A549 (cell line): ENCODE measurements at regions of chr3 and their contacts with region 1.

Region 1: GRCh38 chr3:73056014-73056844 is 5.2 kb upstream of the EBLN2 start:
- DNase-seq: peak; percentile 12 to 64
- ATAC-seq: peak; percentile 56 to 79; a peak in 4 of 6 replicates
- H3K4me3 ChIP-seq: no peak overlapping the region
- H3K27ac ChIP-seq: peak overlapping the region in 1 of 2 experiments; percentile 51; a peak in 3 of 6 replicates
- H3K4me1 ChIP-seq: peaks cover 30% of the 10 kb centered on the region; the same call in 2 of the 3 replicates
- CTCF ChIP-seq: peak; percentile 70
- EP300 ChIP-seq: no peak
- POLR2A ChIP-seq: no peak
- RAD21 ChIP-seq: peak; percentile 66 to 74

Region 2: GRCh38 chr3:72418244-72418643 is 638.0 kb before region 1 on chr3:
- CTCF ChIA-PET with region 1: no interaction called
- POLR2A ChIA-PET with region 1: no interaction called
- DNase-seq: no peak
- ATAC-seq: no peak
- H3K4me3 ChIP-seq: no peak overlapping the region
- H3K27ac ChIP-seq: no peak overlapping the region
- H3K4me1 ChIP-seq: peaks cover 5% of the 10 kb centered on the region; the same call in 1 of the 3 replicates
- CTCF ChIP-seq: no peak
- EP300 ChIP-seq: no peak
- POLR2A ChIP-seq: no peak
- RAD21 ChIP-seq: no peak

Region 3: DNA sequence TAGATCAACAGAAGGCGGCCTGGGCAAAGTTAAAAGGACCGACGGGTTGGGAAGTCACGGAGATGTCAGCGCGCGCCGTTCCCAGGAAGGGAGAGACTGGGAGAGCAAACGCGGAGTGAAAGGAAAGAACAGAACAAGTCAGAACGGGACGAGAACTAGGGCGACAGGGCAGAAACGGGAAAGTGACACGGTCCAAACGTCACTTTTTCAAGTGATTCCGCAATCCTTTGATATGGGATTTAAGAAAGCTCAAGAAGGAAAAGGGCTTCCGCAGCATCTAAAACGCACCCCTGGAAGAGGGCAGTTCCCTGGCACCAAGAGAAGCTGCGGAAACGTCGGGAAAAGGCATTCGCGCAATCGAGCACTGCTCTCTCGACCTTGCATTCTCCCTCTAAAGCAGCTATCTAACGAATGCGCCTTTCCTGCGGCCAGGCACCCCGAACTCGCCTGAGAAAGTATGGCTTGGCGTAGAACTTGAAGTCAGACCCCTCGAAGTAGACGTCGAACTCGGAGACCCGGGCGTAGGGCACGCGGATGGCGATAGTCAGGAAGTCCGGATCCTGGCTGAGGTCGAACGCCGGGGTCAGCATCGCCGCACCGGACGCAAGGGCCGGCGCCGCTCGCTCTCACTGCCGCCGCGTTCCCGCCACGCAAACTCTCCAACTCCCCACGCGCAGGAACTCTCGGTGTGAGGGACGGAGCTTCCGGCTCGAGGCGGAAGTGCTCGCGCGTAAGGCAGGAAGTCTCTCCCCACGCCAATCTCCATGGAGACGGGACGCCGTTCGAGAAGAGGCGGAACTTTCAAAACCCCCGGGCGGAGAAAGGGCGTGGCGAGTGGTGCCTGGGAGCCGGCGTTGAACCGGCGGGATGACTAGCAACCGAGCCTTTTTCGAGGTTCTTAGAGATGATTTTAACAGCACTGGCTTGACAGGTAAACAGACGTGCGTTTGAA is 208.2 kb before region 1 on chr3 and contains the start of gene SHQ1:
- CTCF ChIA-PET with region 1: interaction called, 37 read pairs
- POLR2A ChIA-PET with region 1: no interaction called
- DNase-seq: peak; percentile 84 to 92
- ATAC-seq: peak; percentile 98
- H3K4me3 ChIP-seq: peak within 1 kb of the TSS; percentile 80
- H3K27ac ChIP-seq: peak within 1 kb of the TSS; percentile 74 to 91
- H3K4me1 ChIP-seq: peaks cover 31% of the 10 kb centered on the region
- CTCF ChIP-seq: no peak
- EP300 ChIP-seq: no peak
- POLR2A ChIP-seq: peak; percentile 88
- RAD21 ChIP-seq: no peak
- polyA plus RNA-seq, gene SHQ1: 19.5 and 22.2 TPM in 2 replicates

Region 4: DNA sequence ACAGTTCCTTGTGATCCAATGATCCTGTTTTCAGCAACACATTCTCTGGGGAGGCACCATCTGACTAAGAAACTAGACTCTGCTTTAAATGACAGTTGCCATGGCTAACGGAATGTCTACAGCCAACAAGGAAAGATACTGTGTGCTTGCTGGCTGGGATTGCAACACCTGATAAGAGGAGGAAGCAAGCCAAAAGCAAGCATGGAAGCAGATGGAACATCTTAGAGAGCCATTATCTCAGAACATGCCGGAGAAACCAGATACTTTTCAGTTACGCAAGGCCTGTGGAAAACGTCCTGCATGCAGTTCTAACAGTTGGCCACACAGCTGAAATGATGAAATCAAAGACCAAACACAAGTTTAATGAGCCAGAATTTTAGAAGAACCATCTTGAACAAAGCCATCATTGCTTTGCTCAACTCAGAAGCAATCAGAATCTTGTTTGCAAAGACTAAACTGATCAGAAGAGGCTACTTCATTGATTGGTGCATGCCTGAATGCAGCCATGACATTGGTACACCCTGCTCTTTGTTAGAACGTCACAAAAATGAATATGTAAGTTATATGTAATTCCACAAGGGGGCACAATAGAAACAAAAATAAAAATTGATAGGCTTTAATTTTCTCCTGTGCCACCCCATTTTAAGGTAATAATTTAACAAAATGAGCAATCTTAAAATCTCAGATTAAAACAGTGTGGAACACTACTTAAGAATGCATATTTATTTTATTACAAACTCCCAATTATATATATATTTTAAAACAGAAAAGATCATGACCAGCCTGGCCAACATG is 117.6 kb before region 1 on chr3:
- CTCF ChIA-PET with region 1: interaction called, 42 read pairs
- POLR2A ChIA-PET with region 1: no interaction called
- DNase-seq: peak; percentile 70
- ATAC-seq: peak; percentile 94 to 98
- H3K4me3 ChIP-seq: no peak overlapping the region
- H3K27ac ChIP-seq: peak overlapping the region in 1 of 2 experiments; percentile 33; a peak in 1 of 6 replicates
- H3K4me1 ChIP-seq: peaks cover 6% of the 10 kb centered on the region; the same call in 1 of the 3 replicates
- CTCF ChIP-seq: peak; percentile 79
- EP300 ChIP-seq: no peak
- POLR2A ChIP-seq: no peak
- RAD21 ChIP-seq: peak; percentile 55 to 74

Region 5: DNA sequence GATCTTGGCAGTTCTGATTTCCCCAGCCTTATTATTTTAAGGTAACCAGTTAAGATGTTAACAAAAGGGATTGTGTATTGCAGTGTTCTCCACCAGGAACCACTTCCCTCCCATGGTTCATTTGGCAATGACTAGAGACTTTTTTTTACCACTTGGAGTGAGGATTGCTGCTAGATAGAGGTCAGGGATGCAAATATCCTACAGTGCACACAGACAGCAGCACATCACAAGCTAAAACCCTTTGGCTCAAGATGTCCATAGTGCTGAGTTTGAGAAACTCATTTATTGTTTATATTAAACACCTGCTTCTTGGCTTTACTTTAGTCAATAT is 18.9 kb before region 1 on chr3:
- CTCF ChIA-PET with region 1: interaction called, 11 read pairs
- POLR2A ChIA-PET with region 1: no interaction called
- DNase-seq: no peak
- ATAC-seq: peak in 1 of 2 experiments; percentile 39; a peak in 3 of 6 replicates
- H3K4me3 ChIP-seq: no peak overlapping the region
- H3K27ac ChIP-seq: no peak overlapping the region
- H3K4me1 ChIP-seq: peaks cover 18% of the 10 kb centered on the region
- CTCF ChIP-seq: no peak
- EP300 ChIP-seq: no peak
- POLR2A ChIP-seq: no peak
- RAD21 ChIP-seq: no peak

Region 6: DNA sequence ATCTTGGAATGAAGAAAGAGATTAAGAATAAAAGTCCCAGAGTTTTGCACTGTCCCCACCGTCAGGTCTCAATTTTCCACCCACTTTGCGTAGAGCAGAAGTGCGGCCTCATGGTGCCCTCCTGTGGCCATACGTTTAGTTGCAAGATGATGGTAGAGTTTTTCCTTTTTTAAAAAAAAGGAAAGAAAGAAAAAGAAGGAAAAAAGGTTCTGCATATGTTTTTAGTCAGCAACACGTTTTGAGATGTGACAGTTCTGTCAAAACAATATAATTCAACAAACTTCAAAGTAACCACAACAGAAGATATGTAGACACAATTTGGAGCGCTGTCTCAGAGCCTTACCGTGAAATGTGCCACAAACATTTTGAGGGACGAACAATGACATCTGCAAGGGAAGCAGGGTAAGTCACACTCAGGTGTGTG is 29.9 kb after region 1 on chr3:
- CTCF ChIA-PET with region 1: interaction called, 12 read pairs
- POLR2A ChIA-PET with region 1: no interaction called
- DNase-seq: peak; percentile 28 to 42
- ATAC-seq: peak; percentile 71 to 85; a peak in 5 of 6 replicates
- H3K4me3 ChIP-seq: no peak overlapping the region
- H3K27ac ChIP-seq: no peak overlapping the region
- H3K4me1 ChIP-seq: no peaks in the 10 kb centered on the region
- CTCF ChIP-seq: peak; percentile 94
- EP300 ChIP-seq: no peak
- POLR2A ChIP-seq: no peak
- RAD21 ChIP-seq: peak; percentile 94 to 95